Panc1 (cell line): ENCODE measurements at regions of chr3 and their contacts with region 1.

Region 1: GRCh38 chr3:103909395-103909794 is 1457.3 kb upstream of the ALCAM start:
- DNase-seq: no peak
- ATAC-seq: no peak
- H3K4me3 ChIP-seq: no peak overlapping the region
- H3K27ac ChIP-seq: no peak overlapping the region
- H3K4me1 ChIP-seq: no peaks in the 10 kb centered on the region
- H3K27me3 ChIP-seq: no peaks in the 10 kb centered on the region
- CTCF ChIP-seq: no peak

Region 2: DNA sequence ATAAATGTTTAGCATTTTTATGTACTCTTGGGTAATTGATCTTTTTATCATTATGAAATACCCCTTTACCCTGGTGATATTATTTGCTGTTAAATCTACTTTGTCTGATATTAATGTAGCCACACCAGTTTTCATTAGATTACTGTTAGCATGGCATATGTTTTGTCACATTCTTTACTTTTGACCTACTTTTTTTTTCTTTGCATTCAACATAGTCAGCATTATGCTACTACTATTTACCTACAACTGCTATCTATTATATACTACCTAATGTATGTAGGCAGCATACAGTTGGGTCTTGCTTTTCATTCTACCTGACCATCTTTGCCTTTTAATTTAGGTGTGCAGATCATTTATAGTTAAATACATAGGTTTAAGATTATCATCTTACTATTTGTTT is 27.7 kb after region 1 on chr3:
- CTCF ChIA-PET with region 1: no interaction called
- POLR2A ChIA-PET with region 1: no interaction called
- in situ Hi-C with region 1: no loop called
- intact Hi-C with region 1: no loop called
- DNase-seq: no peak
- ATAC-seq: no peak
- H3K4me3 ChIP-seq: no peak overlapping the region
- H3K27ac ChIP-seq: no peak overlapping the region
- H3K4me1 ChIP-seq: no peaks in the 10 kb centered on the region
- H3K27me3 ChIP-seq: no peaks in the 10 kb centered on the region
- CTCF ChIP-seq: no peak

Region 3: GRCh38 chr3:104066658-104067057 is 157.3 kb after region 1 on chr3:
- CTCF ChIA-PET with region 1: no interaction called
- POLR2A ChIA-PET with region 1: no interaction called
- in situ Hi-C with region 1: no loop called
- intact Hi-C with region 1: no loop called
- DNase-seq: no peak
- ATAC-seq: no peak
- H3K4me3 ChIP-seq: no peak overlapping the region
- H3K27ac ChIP-seq: no peak overlapping the region
- H3K4me1 ChIP-seq: no peaks in the 10 kb centered on the region
- H3K27me3 ChIP-seq: no peaks in the 10 kb centered on the region
- CTCF ChIP-seq: no peak

Region 4: DNA sequence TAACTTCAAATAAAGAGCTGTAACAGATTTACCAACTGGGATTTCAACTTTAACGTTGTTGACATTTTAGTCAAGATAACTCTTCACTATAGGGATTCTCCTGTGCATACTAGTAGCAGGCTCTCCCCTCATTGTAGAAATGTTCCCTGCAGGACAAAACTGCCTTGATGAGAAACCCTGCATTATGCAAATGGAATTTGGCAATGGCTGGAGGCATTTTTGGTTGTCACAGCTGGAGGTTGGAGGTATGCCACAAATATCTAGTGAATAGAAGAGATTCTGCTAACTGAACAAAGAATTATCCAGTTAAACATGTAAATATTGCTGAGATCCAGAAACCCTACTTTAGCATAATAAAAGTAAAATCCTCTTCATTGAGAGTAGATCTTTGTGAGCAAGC is 528.5 kb after region 1 on chr3:
- CTCF ChIA-PET with region 1: no interaction called
- POLR2A ChIA-PET with region 1: interaction called, 11 read pairs
- in situ Hi-C with region 1: no loop called
- intact Hi-C with region 1: no loop called
- DNase-seq: no peak
- ATAC-seq: no peak
- H3K4me3 ChIP-seq: no peak overlapping the region
- H3K27ac ChIP-seq: no peak overlapping the region
- H3K4me1 ChIP-seq: no peaks in the 10 kb centered on the region
- H3K27me3 ChIP-seq: no peaks in the 10 kb centered on the region
- CTCF ChIP-seq: no peak